PC-9 (cell line): ENCODE measurements at regions of chr12 and their contacts with region 1.

Region 1: GRCh38 chr12:13094347-13094746 is 9.1 kb downstream of the GSG1 start:
- DNase-seq: peak; percentile 30 to 88
- H3K4me3 ChIP-seq: no peak overlapping the region
- H3K27ac ChIP-seq: peak overlapping the region; percentile 80
- H3K4me1 ChIP-seq: peaks cover 67% of the 10 kb centered on the region
- H3K27me3 ChIP-seq: no peaks in the 10 kb centered on the region
- CTCF ChIP-seq: no peak

Region 2: DNA sequence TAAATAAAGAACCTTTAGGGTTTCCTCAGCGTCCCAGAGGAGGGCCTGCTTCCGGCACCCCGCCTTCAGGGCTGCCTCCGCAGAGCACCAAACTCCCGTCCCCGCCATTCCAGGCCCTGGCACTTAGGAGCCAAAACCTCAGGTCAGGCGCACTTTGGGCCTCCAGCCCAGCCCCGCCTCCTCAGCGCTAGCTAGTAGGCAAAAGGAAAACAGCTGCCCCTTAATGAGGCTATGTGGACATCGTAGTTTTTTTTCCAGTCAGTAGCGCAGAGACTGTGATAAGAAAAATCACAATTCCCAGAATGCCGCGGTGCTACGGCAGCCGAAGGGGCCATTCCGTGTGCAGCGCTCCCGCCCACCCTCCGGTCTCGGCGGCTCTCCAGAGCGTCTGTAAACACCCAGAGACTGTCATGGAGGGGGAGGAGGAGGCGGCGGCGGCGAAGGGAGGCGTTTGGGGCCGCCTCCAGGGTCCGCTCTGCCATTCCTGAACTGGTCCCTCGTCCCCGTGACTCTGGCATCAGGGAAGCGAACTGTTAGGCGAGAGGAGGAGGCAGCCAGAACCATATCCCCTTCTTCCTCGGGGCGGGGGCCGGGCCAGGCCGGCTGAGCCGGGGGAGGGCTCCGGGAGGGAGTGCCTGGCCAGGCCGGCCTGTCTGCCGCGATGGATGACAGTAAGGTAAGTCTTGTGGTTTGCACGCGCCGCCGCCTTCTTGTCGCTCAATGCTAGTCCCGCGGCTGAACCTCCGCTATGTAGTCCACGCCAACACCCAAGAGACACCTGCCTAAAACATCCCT is 482.6 kb before region 1 on chr12 and contains the start of gene CREBL2:
- CTCF ChIA-PET with region 1: no interaction called
- POLR2A ChIA-PET with region 1: no interaction called
- intact Hi-C with region 1: no loop called
- DNase-seq: peak; percentile 91 to 93
- H3K4me3 ChIP-seq: peak within 1 kb of the TSS; percentile 89
- H3K27ac ChIP-seq: peak within 1 kb of the TSS; percentile 83
- H3K4me1 ChIP-seq: peaks cover 30% of the 10 kb centered on the region
- H3K27me3 ChIP-seq: no peaks in the 10 kb centered on the region
- CTCF ChIP-seq: no peak
- total RNA-seq, gene CREBL2: 26.6 and 30.3 TPM in 2 replicates

Region 3: GRCh38 chr12:12803186-12803585 is 291.2 kb before region 1 on chr12:
- CTCF ChIA-PET with region 1: interaction called, 6 read pairs
- POLR2A ChIA-PET with region 1: no interaction called
- intact Hi-C with region 1: loop called (anchors 1 kb)
- DNase-seq: peak; percentile 97 to 100
- H3K4me3 ChIP-seq: peak overlapping the region; percentile 47; the same call in 1 of the 2 replicates
- H3K27ac ChIP-seq: peak overlapping the region; percentile 100
- H3K4me1 ChIP-seq: peaks cover 91% of the 10 kb centered on the region
- H3K27me3 ChIP-seq: no peaks in the 10 kb centered on the region
- CTCF ChIP-seq: no peak

Region 4: DNA sequence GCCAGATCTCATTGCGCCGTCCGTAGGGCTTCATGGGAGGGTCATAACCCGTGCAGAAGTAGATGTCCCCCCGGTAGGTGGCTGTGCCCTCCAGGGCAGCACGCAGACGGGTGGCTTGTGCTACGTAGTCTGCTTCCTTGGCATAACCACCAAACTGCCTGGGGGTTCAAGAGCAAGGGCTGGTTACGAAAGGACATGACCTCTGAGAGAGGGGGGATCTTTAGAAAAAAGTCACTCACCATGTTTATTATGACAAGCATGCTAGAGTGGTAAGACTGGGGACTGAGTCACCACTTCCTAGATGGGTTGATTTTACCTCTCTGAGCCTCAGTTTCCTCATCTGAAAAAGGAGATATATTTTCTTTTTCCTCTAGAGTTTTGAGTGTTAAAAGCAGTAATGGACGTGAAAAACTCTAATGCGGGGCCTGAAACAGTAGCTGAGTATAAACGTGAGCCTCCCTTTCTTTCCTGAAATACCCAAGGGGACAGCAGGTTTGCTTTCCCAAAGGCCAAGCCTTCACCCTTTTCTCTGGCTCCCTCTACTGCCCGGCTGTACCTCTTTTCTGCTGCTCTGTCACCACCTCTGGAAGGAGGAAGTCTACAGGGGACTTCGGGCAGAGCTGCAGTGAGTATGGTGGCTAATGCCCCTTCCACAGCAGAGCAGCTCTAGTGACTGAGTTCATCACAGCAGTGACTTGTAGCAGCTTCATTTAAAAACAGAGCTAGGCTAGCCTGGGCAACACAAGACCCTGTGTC is 118.8 kb before region 1 on chr12:
- CTCF ChIA-PET with region 1: interaction called, 11 read pairs
- POLR2A ChIA-PET with region 1: no interaction called
- intact Hi-C with region 1: no loop called
- DNase-seq: peak in 1 of 2 experiments; percentile 66
- H3K4me3 ChIP-seq: no peak overlapping the region
- H3K27ac ChIP-seq: peak overlapping the region; percentile 66
- H3K4me1 ChIP-seq: peaks cover 36% of the 10 kb centered on the region
- H3K27me3 ChIP-seq: no peaks in the 10 kb centered on the region
- CTCF ChIP-seq: peak; percentile 48

Region 5: DNA sequence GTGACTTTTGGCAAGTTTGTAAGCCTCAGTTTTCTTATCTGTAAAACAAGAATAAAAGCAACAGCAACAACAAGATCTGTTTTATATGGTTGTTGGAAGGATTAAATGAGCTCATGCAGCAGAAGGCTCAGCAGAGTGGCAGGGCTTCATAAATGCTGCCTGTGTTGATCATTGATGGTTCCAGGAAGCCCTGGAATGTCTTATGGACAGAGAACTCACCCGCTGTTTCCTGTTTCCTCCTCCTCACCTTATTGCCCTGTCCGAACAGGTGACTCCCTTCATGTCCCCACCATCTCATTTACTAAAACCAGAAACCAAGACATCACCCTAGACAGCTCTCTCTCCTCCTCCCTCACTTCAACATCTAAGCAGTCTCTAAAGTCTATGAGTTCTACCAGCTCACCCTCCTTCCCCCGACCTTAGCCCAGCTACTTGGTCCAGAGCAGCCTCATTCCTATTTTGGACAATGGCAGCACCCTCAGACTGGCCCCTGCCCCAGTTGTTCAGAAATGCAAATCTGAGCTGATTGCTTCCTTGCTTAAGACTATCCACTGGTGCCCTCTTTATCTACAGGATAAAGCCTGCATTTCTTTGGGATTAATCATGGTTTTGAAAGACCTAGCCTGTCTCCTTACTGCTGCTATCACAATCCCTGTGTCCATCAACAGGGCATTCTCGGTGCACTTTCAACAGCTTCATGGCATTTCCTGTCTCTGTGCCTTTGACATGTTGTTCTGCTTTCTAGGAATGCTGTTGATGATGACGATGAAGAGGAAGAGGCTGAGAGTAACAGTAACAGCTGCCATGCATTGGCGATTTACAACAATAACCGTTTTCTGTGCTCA is 30.5 kb after region 1 on chr12:
- CTCF ChIA-PET with region 1: no interaction called
- POLR2A ChIA-PET with region 1: no interaction called
- intact Hi-C with region 1: loop called (anchors 1 kb)
- DNase-seq: peak; percentile 66 to 93
- H3K4me3 ChIP-seq: no peak overlapping the region
- H3K27ac ChIP-seq: peak overlapping the region; percentile 41
- H3K4me1 ChIP-seq: peaks cover 45% of the 10 kb centered on the region
- H3K27me3 ChIP-seq: no peaks in the 10 kb centered on the region
- CTCF ChIP-seq: no peak

Region 6: DNA sequence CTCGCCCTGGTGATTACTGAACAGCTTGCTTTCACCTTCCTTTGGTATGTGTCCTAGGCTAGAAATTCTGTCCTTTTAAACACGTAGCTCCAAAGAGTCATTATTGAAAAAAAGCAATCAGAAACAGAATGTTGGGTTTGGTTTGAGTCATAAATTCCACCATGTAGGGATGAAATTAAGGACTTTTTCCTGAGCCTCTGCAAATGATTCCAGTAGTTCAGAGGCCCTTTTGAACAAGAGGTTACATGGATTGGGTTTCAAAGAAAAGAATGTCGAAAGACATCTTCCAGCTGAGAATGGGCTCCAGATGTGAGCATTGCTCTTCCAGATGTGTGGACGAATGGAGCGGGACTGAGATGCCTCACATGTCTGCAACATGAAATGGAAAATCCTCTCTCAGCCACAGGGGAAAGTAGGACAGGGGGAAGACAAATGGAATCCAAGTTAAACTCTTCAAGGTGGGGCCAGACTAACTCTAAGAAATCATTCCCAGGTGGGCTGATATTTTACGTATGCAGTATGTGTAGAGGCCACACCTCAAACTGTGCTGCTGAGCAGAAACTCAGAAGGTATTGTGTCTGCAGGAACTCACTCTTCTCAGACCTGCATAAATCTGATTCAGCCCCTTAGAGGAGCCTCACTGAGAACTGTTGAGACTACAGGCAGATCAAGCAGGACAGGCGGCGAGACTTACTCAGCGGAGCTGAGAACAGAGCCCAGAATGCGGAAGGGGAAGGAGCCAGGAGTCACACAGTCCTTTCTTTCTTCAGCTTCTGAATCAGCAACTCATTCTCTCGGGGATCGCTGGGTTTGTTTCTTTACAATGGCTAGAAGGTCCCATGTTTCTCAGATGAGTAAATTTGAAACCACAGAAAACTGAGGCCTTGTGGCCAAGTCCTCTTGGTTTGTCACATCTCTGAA is 78.9 kb after region 1 on chr12:
- CTCF ChIA-PET with region 1: interaction called, 7 read pairs
- POLR2A ChIA-PET with region 1: interaction called, 19 read pairs
- intact Hi-C with region 1: loop called (anchors 1 kb)
- DNase-seq: peak; percentile 93 to 97
- H3K4me3 ChIP-seq: peak overlapping the region; percentile 37; the same call in 1 of the 2 replicates
- H3K27ac ChIP-seq: peak overlapping the region; percentile 99
- H3K4me1 ChIP-seq: peaks cover 100% of the 10 kb centered on the region
- H3K27me3 ChIP-seq: no peaks in the 10 kb centered on the region
- CTCF ChIP-seq: no peak

Region 7: GRCh38 chr12:13211859-13212664 is 117.7 kb after region 1 on chr12:
- CTCF ChIA-PET with region 1: interaction called, 10 read pairs
- POLR2A ChIA-PET with region 1: interaction called, 13 read pairs
- intact Hi-C with region 1: no loop called
- DNase-seq: peak in 1 of 2 experiments; percentile 64
- H3K4me3 ChIP-seq: no peak overlapping the region
- H3K27ac ChIP-seq: peak overlapping the region; percentile 99
- H3K4me1 ChIP-seq: peaks cover 48% of the 10 kb centered on the region
- H3K27me3 ChIP-seq: no peaks in the 10 kb centered on the region
- CTCF ChIP-seq: peak; percentile 71